PC-3 (cell line): ENCODE measurements at regions of chr3 and their contacts with region 1.

Region 1: GRCh38 chr3:173045770-173046382 is 95.2 kb downstream of the SPATA16 start:
- DNase-seq: peak; percentile 35
- ATAC-seq: no peak
- H3K4me3 ChIP-seq: no peak overlapping the region
- H3K27ac ChIP-seq: no peak overlapping the region
- H3K4me1 ChIP-seq: no peaks in the 10 kb centered on the region
- H3K27me3 ChIP-seq: peaks cover 41% of the 10 kb centered on the region
- CTCF ChIP-seq: peak; percentile 52

Region 2: DNA sequence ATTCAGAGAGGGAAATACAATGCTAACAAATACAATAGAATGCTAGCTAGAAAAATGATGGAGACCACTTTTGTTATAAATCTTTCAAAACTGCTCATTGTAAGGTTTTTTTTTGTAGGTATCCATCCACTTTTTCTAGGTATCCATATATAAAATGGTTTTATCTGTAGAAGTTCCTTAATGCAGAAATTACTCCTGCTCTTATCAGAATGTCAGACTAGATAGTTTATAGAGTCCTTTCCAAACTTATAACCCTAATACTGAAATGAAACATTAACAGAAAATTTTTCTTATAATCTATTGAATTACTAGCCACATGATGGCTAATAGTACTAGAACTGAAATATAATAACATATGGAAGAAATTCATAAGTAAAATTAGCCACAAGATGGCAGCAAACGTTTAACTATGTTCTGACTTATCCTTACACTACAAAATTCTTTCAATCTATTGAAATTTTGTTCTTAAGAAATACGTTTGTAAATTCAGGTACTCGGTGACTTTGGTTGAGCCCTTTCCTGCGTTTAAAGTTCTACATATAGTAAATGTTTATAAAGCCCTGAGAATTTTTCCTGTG is 236.8 kb before region 1 on chr3:
- CTCF ChIA-PET with region 1: no interaction called
- POLR2A ChIA-PET with region 1: no interaction called
- intact Hi-C with region 1: loop called (anchors 1 kb)
- DNase-seq: peak; percentile 60
- ATAC-seq: peak; percentile 39; the same call in 1 of the 2 replicates
- H3K4me3 ChIP-seq: no peak overlapping the region
- H3K27ac ChIP-seq: no peak overlapping the region
- H3K4me1 ChIP-seq: no peaks in the 10 kb centered on the region
- H3K27me3 ChIP-seq: no peaks in the 10 kb centered on the region
- CTCF ChIP-seq: peak; percentile 66

Region 3: GRCh38 chr3:172836390-172836997 is 209.4 kb before region 1 on chr3:
- CTCF ChIA-PET with region 1: no interaction called
- POLR2A ChIA-PET with region 1: no interaction called
- intact Hi-C with region 1: loop called (anchors 1 kb)
- DNase-seq: peak; percentile 63
- ATAC-seq: peak; percentile 88
- H3K4me3 ChIP-seq: no peak overlapping the region
- H3K27ac ChIP-seq: no peak overlapping the region
- H3K4me1 ChIP-seq: no peaks in the 10 kb centered on the region
- H3K27me3 ChIP-seq: peaks cover 31% of the 10 kb centered on the region
- CTCF ChIP-seq: peak; percentile 90

Region 4: DNA sequence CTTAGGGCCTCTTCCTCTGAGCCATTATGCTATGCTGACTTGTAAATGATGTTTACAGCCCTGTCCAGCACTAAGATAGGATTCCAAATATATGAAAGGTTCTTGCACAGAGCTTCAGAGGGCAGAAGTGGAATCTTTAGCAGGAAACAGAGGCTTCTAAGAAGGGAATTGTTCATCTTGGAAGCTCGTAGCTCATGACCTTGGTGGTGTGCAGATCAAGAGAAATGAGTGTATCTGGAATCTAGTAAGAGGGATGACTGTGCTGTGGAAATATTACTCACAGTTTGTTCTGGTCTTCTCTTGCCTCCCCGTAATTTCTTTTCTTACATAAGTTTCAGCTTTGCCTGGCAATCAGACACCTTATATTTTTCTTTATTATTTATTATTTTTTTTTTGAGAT is 80.6 kb before region 1 on chr3:
- CTCF ChIA-PET with region 1: no interaction called
- POLR2A ChIA-PET with region 1: no interaction called
- intact Hi-C with region 1: no loop called
- DNase-seq: peak; percentile 8
- ATAC-seq: no peak
- H3K4me3 ChIP-seq: no peak overlapping the region
- H3K27ac ChIP-seq: no peak overlapping the region
- H3K4me1 ChIP-seq: no peaks in the 10 kb centered on the region
- H3K27me3 ChIP-seq: peaks cover 36% of the 10 kb centered on the region
- CTCF ChIP-seq: no peak

Region 5: GRCh38 chr3:172982736-172983364 is 63.0 kb before region 1 on chr3:
- CTCF ChIA-PET with region 1: no interaction called
- POLR2A ChIA-PET with region 1: no interaction called
- intact Hi-C with region 1: loop called (anchors 5 kb)
- DNase-seq: peak; percentile 18
- ATAC-seq: peak; percentile 57; the same call in 1 of the 2 replicates
- H3K4me3 ChIP-seq: no peak overlapping the region
- H3K27ac ChIP-seq: no peak overlapping the region
- H3K4me1 ChIP-seq: no peaks in the 10 kb centered on the region
- H3K27me3 ChIP-seq: peaks cover 20% of the 10 kb centered on the region; the same call in 1 of the 2 replicates
- CTCF ChIP-seq: peak; percentile 54